Activated naive CD4-positive, alpha-beta T cell treated with anti-CD3 and anti-CD28 coated beads for 36 hours (primary cell): ENCODE measurements at regions of chr2 and their contacts with region 1.

Region 1: DNA sequence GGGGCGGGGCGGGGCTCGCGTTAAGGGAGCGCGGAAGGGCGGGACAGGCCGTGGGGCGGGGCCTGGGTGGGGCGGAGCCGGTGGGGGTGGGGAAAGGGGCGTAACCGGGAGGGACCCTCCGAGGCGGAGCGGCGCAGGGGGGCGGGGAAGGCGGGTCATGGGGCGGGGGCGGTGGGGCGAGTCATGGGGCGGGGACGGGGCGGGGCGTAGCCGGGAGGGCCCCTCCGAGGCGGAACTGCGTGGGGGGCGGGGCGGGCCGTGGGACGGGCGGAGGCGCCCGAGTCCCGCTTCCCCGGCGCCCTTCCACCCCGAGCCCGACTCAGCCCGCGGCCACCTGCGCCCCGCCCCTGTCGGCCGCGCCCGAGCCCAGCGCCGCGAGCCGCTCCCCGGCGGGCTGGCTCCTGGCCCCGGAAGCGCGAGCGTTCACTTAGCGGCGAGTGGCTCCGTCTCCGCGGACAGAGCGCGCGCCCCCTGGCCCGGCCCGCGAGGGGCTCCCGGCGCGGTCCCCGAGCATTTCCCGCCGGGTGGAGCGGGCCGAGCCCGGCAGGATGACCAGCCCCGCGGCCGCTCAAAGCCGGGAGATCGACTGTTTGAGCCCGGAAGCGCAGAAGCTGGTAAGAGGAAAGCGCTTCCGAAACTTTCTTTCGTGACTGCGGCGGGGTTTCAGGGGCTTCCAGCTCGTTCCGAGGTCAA is 64.7 kb downstream of the LRRFIP1 start:
- DNase-seq: peak; percentile 94
- H3K4me3 Mint-ChIP-seq: peak overlapping the region; percentile 87
- H3K27ac Mint-ChIP-seq: peak overlapping the region; percentile 95
- H3K4me1 Mint-ChIP-seq: peaks cover 66% of the 10 kb centered on the region
- H3K27me3 Mint-ChIP-seq: no peaks in the 10 kb centered on the region

Region 2: GRCh38 chr2:237345891-237346640 is 346.0 kb before region 1 on chr2:
- CTCF ChIA-PET with region 1: no interaction called
- intact Hi-C with region 1: no loop called
- DNase-seq: no peak
- H3K4me3 Mint-ChIP-seq: no peak overlapping the region
- H3K27ac Mint-ChIP-seq: no peak overlapping the region
- H3K4me1 Mint-ChIP-seq: no peaks in the 10 kb centered on the region
- H3K27me3 Mint-ChIP-seq: no peaks in the 10 kb centered on the region

Region 3: DNA sequence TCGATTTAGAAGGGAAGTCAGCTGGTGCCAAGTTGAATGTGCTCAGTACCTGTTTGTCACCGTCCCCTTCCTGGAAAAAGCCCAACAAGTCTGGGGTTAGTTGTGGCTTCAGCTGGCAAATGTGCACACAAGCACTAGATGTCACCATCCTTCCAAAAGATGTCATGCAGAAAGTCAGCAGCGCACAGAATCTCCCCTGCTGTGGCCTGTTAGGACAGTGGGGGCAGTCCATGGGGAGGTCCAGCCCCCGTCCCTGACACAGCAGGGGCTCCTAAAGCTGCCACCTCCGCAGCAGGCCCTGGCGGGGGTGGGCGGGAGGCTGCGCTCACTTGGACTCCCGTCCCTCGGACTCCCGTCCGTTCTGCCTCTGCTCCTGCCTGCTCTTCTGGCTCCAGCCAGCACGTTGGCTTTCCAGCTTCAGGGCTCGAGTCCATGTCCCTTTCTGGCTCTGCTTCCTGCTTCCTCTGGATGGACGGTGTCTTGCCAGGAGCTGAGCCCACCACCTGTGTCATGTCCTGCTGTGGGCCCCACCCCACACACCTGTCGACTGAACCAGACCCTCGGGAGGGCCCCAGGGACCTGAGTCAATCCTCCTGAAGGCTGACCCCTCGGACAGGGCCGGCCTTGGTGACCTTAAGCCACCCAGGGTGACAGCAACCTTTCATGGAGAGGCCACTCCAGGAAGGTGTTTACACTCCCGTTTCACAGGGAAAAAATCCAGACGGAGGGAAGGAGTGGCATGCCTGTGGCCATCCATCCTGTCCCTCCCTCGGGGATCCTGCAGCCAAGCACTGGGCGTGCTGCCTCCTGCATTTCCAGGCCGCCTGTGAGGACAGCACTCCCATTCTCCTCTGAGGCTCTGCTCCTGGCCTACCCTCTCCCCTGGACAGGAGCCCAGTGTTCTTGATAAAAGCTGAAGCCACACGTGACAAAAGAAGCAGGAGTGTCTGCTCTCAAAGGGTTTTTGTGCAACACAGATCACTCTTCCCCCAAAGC is 110.0 kb before region 1 on chr2:
- CTCF ChIA-PET with region 1: interaction called, 3 read pairs
- intact Hi-C with region 1: loop called (anchors 1 kb)
- DNase-seq: peak; percentile 87
- H3K4me3 Mint-ChIP-seq: no peak overlapping the region
- H3K27ac Mint-ChIP-seq: peak overlapping the region; percentile 56
- H3K4me1 Mint-ChIP-seq: peaks cover 4% of the 10 kb centered on the region
- H3K27me3 Mint-ChIP-seq: no peaks in the 10 kb centered on the region

Region 4: DNA sequence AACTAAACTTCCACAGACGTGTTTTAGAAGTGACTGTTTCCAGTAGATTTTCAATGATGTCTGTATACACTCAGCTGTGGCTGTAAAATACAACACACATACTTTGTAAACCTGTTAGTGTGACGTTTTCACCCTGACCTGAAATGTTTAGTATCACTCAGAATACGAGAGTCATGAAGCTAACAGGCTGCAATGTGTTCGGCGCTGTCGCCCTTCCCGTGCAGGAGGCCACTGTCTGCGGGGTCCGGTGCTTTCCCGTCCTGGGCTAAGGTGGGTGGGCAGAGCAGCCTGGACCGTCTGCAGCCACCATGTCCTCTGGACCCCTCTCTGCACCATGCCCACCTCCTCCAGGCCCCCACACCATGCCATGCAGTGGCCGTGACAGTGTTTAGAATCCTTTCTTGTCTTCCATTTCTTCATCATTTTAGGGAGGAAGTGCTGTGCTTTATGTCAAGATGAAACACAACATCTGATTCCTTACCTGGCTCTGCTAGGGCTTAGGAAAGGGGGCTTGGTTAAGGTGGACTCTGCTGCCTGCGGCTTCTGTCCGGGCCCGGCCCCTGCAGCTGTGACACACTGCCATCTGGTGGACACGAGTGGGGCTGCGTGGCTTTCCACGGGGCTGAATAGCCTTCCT is 52.7 kb after region 1 on chr2:
- CTCF ChIA-PET with region 1: interaction called, 16 read pairs
- intact Hi-C with region 1: loop called (anchors 1 kb)
- DNase-seq: peak; percentile 86
- H3K4me3 Mint-ChIP-seq: no peak overlapping the region
- H3K27ac Mint-ChIP-seq: peak overlapping the region; percentile 76
- H3K4me1 Mint-ChIP-seq: peaks cover 36% of the 10 kb centered on the region
- H3K27me3 Mint-ChIP-seq: no peaks in the 10 kb centered on the region

Region 5: GRCh38 chr2:237998530-237998929 is 306.5 kb after region 1 on chr2:
- CTCF ChIA-PET with region 1: no interaction called
- intact Hi-C with region 1: loop called (anchors 5 kb)
- DNase-seq: peak; percentile 76
- H3K4me3 Mint-ChIP-seq: peak overlapping the region; percentile 50
- H3K27ac Mint-ChIP-seq: peak overlapping the region; percentile 95
- H3K4me1 Mint-ChIP-seq: peaks cover 64% of the 10 kb centered on the region
- H3K27me3 Mint-ChIP-seq: no peaks in the 10 kb centered on the region

Region 6: GRCh38 chr2:238203094-238203972 is 511.3 kb after region 1 on chr2 and contains the start of gene ILKAP:
- CTCF ChIA-PET with region 1: no interaction called
- intact Hi-C with region 1: loop called (anchors 2 kb)
- DNase-seq: peak; percentile 89
- H3K4me3 Mint-ChIP-seq: peak within 1 kb of the TSS; percentile 80
- H3K27ac Mint-ChIP-seq: peak within 1 kb of the TSS; percentile 77
- H3K4me1 Mint-ChIP-seq: peaks cover 41% of the 10 kb centered on the region
- H3K27me3 Mint-ChIP-seq: no peaks in the 10 kb centered on the region
- total RNA-seq, gene ILKAP: 46.6 to 46.7 TPM

Region 7: GRCh38 chr2:239380831-239381708 is 1689.0 kb after region 1 on chr2:
- CTCF ChIA-PET with region 1: no interaction called
- intact Hi-C with region 1: loop called (anchors 2 kb)
- DNase-seq: peak; percentile 85
- H3K4me3 Mint-ChIP-seq: peak overlapping the region; percentile 73
- H3K27ac Mint-ChIP-seq: peak overlapping the region; percentile 95
- H3K4me1 Mint-ChIP-seq: peaks cover 44% of the 10 kb centered on the region
- H3K27me3 Mint-ChIP-seq: no peaks in the 10 kb centered on the region